ENCODE measurements at regions of chr6 and their contacts with region 1.

Region 1: DNA sequence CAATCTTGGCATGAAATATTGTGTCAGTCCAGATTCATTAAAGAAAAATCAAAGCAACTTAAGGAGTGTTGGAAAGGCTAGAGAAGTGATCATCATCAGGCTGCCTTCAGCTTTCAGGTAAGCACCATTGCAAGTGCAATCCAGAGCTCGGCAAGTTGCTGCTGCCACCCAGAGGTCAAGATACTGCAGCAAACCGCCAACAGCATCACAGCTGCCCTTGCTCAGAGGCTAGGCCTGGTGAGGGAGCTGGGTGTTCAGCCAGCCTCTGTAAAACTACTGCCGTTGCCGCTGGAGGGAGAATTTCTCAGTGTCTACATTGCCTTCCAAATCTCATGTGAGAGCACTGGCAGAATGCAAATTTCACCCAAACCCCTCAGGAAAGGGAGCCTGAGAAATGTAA is 5.8 kb upstream of the SYNE1 start:
- DNase-seq: peak; percentile 53
- ATAC-seq: peak; percentile 100
- H3K4me3 ChIP-seq: no peak overlapping the region
- H3K27ac ChIP-seq: no peak overlapping the region
- H3K4me1 ChIP-seq: no peaks in the 10 kb centered on the region
- H3K27me3 ChIP-seq: peaks cover 0 to 9% of the 10 kb centered on the region in 2 experiments; a peak in 2 of 5 replicates
- CTCF ChIP-seq: peak; percentile 86
- EP300 ChIP-seq: no peak
- POLR2A ChIP-seq: no peak
- RAD21 ChIP-seq: peak; percentile 74

Region 2: GRCh38 chr6:152484806-152485205 is 158.2 kb before region 1 on chr6:
- CTCF ChIA-PET with region 1: no interaction called
- POLR2A ChIA-PET with region 1: no interaction called
- in situ Hi-C with region 1: no loop called
- intact Hi-C with region 1: loop called (anchors 5 kb)
- DNase-seq: no peak
- ATAC-seq: no peak
- H3K4me3 ChIP-seq: no peak overlapping the region
- H3K27ac ChIP-seq: no peak overlapping the region
- H3K4me1 ChIP-seq: no peaks in the 10 kb centered on the region
- H3K27me3 ChIP-seq: no peaks in the 10 kb centered on the region
- CTCF ChIP-seq: no peak
- EP300 ChIP-seq: no peak
- POLR2A ChIP-seq: no peak
- RAD21 ChIP-seq: no peak

Measured in HepG2 (cell line).